Activated naive CD4-positive, alpha-beta T cell treated with anti-CD3 and anti-CD28 coated beads for 36 hours (primary cell): ENCODE measurements at regions of chr18 and their contacts with region 1.

Region 1: DNA sequence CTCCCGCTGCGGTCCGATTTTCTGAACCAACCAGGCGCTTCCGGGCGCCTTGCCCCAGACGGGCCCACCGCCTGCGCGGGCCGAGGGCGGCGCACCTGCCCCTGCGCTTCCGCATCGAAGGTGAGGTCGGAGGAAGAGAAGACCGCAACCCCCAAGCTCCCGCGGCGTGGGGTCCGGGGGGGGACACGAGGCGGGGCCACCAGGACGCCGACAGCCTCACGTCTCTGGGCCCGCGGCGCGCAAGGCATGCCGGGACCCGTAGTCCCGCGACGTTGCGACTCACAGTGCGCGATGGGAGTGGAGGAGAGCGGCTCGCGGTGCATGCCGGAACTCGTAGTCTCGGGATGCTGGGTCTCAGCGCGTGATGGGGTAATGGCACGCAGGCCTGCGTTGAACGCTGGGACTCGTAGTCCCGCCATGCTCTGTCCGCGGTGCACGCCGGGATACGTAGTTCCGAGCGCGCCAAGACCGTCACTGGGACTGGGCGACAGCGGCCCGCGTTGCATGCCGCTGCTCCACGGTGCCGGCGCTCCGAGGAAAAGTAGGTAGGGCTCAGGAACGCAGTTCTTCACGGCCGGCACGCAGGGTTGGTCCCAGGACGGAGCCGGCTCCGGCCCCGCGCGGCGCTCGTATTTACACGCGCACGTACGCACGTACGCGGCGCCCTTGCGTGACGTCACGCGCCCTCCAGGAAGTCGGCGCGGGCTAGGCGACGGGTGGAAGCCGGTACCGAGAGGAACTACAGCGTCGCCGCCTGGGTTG is at the start of gene CTDP1:
- DNase-seq: peak; percentile 98
- H3K4me3 Mint-ChIP-seq: peak within 1 kb of the TSS; percentile 93
- H3K27ac Mint-ChIP-seq: peak within 1 kb of the TSS; percentile 98
- H3K4me1 Mint-ChIP-seq: peaks cover 64% of the 10 kb centered on the region
- H3K27me3 Mint-ChIP-seq: no peaks in the 10 kb centered on the region
- total RNA-seq, gene CTDP1: 28.0 to 29.1 TPM

Region 2: DNA sequence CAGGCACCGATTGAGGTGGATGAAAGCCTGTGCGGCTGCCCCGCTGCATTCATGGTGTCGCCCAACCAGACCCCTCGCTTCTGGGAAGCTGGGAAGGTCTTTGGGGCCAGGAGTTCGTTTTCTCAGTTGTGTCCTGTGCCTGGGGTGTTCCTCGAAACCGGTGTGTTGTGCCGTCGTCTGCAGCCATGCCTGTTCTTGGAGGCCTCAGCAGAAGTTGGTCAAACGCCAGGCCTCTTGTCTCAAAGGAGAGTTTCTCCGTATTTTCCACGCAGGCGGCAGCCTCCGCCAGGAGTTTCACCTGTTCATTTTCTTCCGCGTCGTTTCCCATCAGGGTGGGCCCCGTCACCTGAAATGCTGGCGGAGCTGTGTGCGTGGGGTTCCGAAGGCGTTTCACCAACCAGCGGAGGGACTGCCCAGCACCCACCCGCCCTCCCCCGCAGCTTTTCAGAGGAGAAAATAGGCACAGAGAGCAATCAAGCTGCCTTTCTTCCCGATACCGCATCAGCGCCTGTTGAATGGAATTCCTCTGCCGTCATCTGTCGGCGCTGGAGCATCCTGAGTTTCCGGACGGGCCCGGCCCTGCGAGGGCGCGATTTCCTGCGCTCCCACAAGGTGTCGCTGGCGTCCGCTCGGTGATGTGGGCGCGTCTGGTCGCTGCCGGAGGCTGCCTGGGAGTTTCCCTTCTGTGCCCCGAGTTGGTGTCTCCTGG is 300.6 kb before region 1 on chr18:
- CTCF ChIA-PET with region 1: interaction called, 5 read pairs
- intact Hi-C with region 1: loop called (anchors 1 kb)
- DNase-seq: peak; percentile 91
- H3K4me3 Mint-ChIP-seq: no peak overlapping the region
- H3K27ac Mint-ChIP-seq: no peak overlapping the region
- H3K4me1 Mint-ChIP-seq: peaks cover 9% of the 10 kb centered on the region
- H3K27me3 Mint-ChIP-seq: no peaks in the 10 kb centered on the region

Region 3: DNA sequence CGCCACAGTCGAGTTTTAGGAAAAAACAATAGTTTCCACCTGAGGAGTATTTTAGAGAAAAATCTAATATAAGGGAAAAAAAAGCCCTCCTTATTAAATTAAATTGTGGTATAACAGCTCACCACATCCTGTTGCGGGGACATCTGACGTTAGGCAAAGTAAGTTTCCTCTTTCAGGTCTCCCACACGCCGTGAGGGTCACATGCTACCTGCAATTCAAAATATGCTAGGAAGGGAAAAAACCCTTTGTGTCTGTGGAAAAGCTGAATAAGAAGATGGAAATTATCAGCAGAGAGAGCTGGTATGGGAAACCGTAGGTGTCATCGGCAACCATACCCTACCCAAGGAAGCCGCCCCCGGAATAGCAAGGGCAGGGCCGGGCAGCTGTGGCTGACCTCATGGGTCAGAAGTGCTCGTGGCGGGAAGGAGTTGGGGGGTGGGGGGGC is 155.5 kb before region 1 on chr18:
- CTCF ChIA-PET with region 1: no interaction called
- intact Hi-C with region 1: loop called (anchors 1 kb)
- DNase-seq: peak; percentile 92
- H3K4me3 Mint-ChIP-seq: peak overlapping the region; percentile 83
- H3K27ac Mint-ChIP-seq: peak overlapping the region; percentile 100
- H3K4me1 Mint-ChIP-seq: peaks cover 73% of the 10 kb centered on the region
- H3K27me3 Mint-ChIP-seq: no peaks in the 10 kb centered on the region

Region 4: GRCh38 chr18:79693561-79694205 is 14.4 kb after region 1 on chr18:
- CTCF ChIA-PET with region 1: no interaction called
- intact Hi-C with region 1: no loop called
- DNase-seq: no peak
- H3K4me3 Mint-ChIP-seq: no peak overlapping the region
- H3K27ac Mint-ChIP-seq: peak overlapping the region; percentile 46
- H3K4me1 Mint-ChIP-seq: peaks cover 26% of the 10 kb centered on the region
- H3K27me3 Mint-ChIP-seq: no peaks in the 10 kb centered on the region

Region 5: GRCh38 chr18:79750980-79751571 is 71.8 kb after region 1 on chr18:
- CTCF ChIA-PET with region 1: no interaction called
- intact Hi-C with region 1: no loop called
- DNase-seq: no peak
- H3K4me3 Mint-ChIP-seq: no peak overlapping the region
- H3K27ac Mint-ChIP-seq: no peak overlapping the region
- H3K4me1 Mint-ChIP-seq: no peaks in the 10 kb centered on the region
- H3K27me3 Mint-ChIP-seq: no peaks in the 10 kb centered on the region

Region 6: GRCh38 chr18:79944126-79944741 is 264.9 kb after region 1 on chr18:
- CTCF ChIA-PET with region 1: no interaction called
- intact Hi-C with region 1: no loop called
- DNase-seq: peak; percentile 40
- H3K4me3 Mint-ChIP-seq: no peak overlapping the region
- H3K27ac Mint-ChIP-seq: peak overlapping the region; percentile 30
- H3K4me1 Mint-ChIP-seq: peaks cover 33% of the 10 kb centered on the region
- H3K27me3 Mint-ChIP-seq: no peaks in the 10 kb centered on the region

Region 7: DNA sequence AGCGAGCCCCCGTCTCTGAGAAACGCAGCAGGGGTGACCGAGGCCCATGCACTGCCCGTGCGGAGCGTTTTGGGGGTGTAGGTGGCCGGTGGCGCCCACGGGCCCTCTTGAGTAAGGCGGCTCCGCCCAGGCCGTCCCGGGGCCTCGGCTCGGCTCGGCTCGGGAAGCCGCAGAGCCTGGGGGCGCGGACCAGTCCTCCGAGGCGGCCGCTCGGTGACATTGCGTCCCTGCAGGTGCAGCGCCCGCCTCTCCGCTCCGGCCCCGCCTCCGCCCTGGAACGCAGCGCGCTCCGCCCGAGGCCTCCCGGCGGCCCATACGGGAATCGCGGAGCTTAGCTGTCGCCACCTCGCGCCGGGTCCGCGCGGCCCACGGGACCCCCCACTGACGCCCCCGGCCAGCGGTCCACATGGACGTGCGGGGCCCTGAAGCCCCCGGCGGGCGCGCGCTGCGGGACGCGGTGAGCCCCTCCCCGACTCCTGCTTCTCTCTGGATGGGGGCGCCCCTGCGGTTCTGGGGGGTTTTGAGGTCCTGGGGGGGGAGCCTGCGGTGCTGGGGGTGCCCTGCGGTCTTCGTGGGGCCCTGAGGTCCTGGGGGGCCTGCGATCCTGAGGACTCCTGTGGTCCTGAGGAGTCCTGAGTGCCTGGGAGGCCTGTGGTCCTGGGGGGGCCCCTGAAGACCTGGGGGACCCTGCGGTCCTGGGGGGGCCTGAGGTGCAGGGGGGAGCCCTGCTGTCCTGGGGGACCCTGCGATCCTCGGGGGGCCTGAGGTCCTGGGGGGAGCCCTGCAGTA is 285.2 kb after region 1 on chr18 and contains the start of gene HSBP1L1:
- CTCF ChIA-PET with region 1: no interaction called
- intact Hi-C with region 1: loop called (anchors 2 kb)
- DNase-seq: peak; percentile 78
- H3K4me3 Mint-ChIP-seq: peak within 1 kb of the TSS; percentile 71
- H3K27ac Mint-ChIP-seq: peak within 1 kb of the TSS; percentile 80
- H3K4me1 Mint-ChIP-seq: peaks cover 23% of the 10 kb centered on the region
- H3K27me3 Mint-ChIP-seq: no peaks in the 10 kb centered on the region
- total RNA-seq, gene HSBP1L1: 14.2 to 14.8 TPM

Region 8: DNA sequence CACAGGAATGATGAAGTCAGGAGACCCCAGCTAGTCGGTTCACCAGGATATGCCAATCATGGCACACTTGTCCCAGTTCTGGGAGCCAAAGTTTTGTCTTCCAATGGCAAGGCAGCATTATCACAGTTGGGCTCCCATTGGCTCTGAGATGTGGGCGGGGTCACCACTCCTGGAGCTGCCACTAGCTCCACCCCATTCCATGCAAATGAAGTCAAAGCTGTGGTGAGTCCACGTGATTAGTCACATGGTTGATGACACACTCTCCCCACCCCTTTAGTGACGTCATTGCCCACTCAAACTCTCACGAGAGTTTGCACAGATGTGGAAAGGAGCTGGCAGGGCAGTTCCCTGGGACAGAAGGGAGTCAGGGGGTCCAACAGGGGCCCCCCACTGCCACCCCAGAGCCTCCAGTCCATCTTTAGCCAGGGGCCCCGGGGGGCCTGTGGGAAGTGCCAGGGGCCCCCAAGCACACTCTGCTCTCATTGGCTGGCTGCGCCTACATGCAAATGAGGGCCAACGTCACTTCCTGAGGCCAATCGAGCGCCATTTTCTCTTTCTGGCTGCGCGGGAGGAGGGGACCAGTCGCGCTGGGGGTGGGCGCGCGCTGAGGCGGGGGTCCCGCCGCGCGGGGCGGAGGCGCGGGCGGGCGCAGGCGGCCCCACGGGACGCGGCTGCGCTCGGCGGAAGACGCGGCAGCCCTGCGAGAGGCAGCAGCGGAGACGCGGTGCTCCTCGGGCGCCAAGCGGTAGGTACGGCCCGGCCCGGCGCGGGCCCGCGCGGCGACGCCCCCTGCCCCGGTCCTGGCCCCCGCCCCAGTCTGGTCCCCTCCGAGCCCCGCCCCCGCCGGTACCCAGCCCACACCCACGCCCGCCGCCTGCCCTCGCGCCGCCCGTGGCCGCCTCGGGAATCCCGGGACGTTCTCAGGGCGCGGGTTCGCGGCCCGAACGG is 429.7 kb after region 1 on chr18 and contains the start of gene ADNP2:
- CTCF ChIA-PET with region 1: no interaction called
- intact Hi-C with region 1: loop called (anchors 1 kb)
- DNase-seq: peak; percentile 92
- H3K4me3 Mint-ChIP-seq: peak within 1 kb of the TSS; percentile 79
- H3K27ac Mint-ChIP-seq: peak within 1 kb of the TSS; percentile 80
- H3K4me1 Mint-ChIP-seq: peaks cover 32% of the 10 kb centered on the region
- H3K27me3 Mint-ChIP-seq: no peaks in the 10 kb centered on the region
- total RNA-seq, gene ADNP2: 16.8 to 18.0 TPM

Region 9: DNA sequence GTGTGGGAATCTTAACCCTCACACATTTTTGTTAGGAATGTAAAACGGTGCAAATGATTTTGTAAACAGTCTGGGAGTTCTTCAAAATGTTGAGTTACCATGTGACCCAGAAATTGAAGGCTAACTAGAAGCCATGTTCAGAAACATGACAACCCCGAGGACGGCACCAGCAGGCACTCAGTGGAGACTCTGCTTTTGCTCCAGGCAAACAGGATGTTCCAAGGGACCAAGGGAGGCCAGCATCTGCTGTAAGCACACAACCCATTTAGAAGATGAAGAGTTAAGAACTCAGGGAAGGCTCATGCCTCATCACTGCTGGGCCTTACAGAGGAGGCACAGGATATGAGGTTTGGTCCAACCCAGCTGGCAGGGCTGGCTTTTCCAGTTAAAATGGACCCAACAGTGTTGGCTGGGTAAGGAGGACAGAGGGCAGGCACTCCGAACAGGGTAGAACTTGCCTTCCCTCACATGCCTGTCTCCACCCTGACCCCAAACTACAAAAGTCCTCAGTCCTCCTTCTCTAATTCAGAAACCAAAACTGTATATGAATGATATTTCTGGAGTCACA is 544.4 kb after region 1 on chr18:
- CTCF ChIA-PET with region 1: no interaction called
- intact Hi-C with region 1: no loop called
- DNase-seq: no peak
- H3K4me3 Mint-ChIP-seq: no peak overlapping the region
- H3K27ac Mint-ChIP-seq: no peak overlapping the region
- H3K4me1 Mint-ChIP-seq: no peaks in the 10 kb centered on the region
- H3K27me3 Mint-ChIP-seq: peaks cover 15% of the 10 kb centered on the region